ENCODE measurements at regions of chr13 and their contacts with region 1.

Region 1: DNA sequence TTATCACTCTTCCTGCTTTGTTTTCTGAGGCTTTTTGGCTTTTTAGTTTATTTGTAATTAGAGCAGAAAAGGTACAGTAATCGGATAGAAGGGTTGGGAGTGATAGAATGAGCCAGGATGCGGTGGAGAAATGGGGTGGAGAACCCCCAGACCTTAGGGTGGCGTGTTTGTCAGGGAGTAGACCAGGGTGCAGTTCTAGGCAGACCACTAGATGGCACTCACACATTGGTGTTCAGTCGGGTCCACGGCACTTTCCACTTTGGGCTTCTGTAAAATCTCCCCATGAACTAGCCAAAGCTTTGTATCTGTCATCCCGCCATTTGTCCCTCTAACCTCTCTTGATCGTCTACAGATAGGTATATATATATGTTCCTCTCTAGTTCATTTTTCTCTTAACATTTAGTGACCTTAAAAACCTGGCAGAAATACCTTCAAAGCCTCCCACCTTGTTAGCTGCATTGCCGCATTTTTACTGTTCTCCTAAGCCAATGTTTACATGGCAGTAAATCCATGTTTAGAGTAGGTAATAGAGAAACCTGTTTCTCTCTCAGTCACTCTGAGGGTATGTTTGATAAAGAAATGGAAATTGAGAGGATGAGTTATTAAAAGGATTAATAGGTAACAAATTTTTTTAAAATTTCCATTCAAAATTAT is 154.9 kb downstream of the TM9SF2 start:
- DNase-seq: peak; percentile 90
- ATAC-seq: peak; percentile 72
- H3K4me3 Mint-ChIP-seq: peak overlapping the region; percentile 42
- H3K27ac Mint-ChIP-seq: peak overlapping the region; percentile 32
- H3K4me1 Mint-ChIP-seq: peaks cover 44% of the 10 kb centered on the region
- H3K27me3 Mint-ChIP-seq: no peaks in the 10 kb centered on the region
- CTCF ChIP-seq: peak; percentile 92

Region 2: GRCh38 chr13:99606324-99607066 is 49.7 kb before region 1 on chr13:
- CTCF ChIA-PET with region 1: interaction called, 16 read pairs
- POLR2A ChIA-PET with region 1: no interaction called
- intact Hi-C with region 1: no loop called
- DNase-seq: peak; percentile 89
- ATAC-seq: peak; percentile 92
- H3K4me3 Mint-ChIP-seq: peak within 1 kb of the TSS; percentile 82
- H3K27ac Mint-ChIP-seq: peak within 1 kb of the TSS; percentile 86
- H3K4me1 Mint-ChIP-seq: peaks cover 41% of the 10 kb centered on the region
- H3K27me3 Mint-ChIP-seq: no peaks in the 10 kb centered on the region
- CTCF ChIP-seq: no peak

Region 3: GRCh38 chr13:99859178-99860177 is 203.3 kb after region 1 on chr13:
- CTCF ChIA-PET with region 1: interaction called, 4 read pairs
- POLR2A ChIA-PET with region 1: no interaction called
- intact Hi-C with region 1: loop called (anchors 10 kb)
- DNase-seq: peak; percentile 91
- ATAC-seq: peak; percentile 92
- H3K4me3 Mint-ChIP-seq: no peak overlapping the region
- H3K27ac Mint-ChIP-seq: peak overlapping the region; percentile 26
- H3K4me1 Mint-ChIP-seq: peaks cover 18% of the 10 kb centered on the region
- H3K27me3 Mint-ChIP-seq: peaks cover 20% of the 10 kb centered on the region
- CTCF ChIP-seq: no peak

Region 4: DNA sequence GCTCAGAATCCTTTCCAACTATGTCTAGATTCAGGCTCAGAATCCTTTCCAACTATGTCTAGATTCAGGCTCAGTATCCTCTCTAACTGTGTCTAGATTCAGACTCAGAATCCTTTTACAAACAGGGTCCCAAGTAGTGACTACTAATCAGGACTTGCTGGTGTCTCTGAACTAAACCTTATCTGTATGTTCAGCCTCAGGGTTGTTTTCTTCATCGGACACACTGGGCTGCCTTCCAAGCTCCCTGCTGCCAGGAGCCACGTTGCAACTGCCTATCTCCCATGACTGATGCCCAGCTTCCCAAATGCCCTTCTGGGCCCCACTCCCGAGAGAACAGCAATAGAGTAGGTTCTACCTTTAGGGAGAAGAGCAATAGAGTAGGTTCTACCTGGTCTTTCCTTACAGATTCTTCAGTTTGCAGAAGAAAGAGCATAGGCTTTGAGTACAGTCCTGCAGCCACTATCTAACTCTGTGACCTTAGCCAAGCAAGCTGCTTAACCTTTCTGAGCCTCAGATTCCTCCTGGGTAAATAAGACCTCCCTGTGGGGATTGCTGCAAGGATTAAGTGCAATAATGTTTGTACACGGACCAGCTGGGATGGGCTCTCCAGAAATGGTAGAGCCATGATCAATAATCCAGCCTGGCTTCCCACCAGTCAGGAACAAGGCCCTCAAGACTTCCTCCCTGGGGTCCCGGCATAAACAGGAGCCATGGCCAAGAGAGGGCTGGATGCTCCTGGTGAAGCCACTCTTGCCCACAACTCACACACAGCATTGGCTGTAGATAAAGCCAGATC is 253.8 kb after region 1 on chr13:
- CTCF ChIA-PET with region 1: interaction called, 33 read pairs
- POLR2A ChIA-PET with region 1: no interaction called
- intact Hi-C with region 1: loop called (anchors 5 kb)
- DNase-seq: no peak
- ATAC-seq: no peak
- H3K4me3 Mint-ChIP-seq: no peak overlapping the region
- H3K27ac Mint-ChIP-seq: no peak overlapping the region
- H3K4me1 Mint-ChIP-seq: peaks cover 15% of the 10 kb centered on the region
- H3K27me3 Mint-ChIP-seq: peaks cover 45% of the 10 kb centered on the region
- CTCF ChIP-seq: no peak

Region 5: DNA sequence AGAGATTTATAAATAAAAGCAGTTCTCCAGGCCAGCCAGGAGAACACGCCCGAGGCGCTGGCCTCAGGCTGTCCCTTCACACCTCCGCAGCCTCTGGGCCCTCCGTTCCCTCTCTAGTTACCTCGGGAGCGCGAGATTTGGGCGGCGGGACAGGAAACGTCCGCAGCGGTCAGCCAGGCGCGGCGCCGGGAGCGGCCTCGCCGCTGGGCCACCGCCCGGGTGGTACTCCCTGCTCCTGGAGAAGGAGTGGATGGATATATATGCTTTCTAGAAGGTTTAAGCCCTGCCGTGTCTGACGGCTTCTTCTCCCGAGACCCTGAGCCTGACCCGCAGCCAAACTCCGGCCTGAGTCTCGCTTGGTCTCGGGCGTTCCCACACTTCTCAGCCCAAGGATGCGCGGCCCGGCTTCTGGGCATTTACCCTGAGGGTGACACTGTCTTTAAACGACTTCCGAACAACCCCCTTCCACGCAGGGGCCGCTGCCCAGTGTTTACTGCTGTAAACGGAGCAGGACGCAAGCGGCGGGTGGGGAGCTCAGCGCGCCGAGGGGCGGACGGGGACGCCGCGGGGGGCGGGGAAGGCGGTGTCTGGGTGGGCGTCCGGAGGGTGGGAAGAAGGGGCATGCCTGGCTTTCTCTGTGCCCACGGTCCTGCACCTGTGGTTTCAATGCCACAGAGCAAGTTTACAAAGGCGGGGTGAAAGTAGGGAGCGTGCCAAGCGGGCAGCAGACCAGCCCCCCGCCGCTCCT is 323.4 kb after region 1 on chr13:
- CTCF ChIA-PET with region 1: interaction called, 4 read pairs
- POLR2A ChIA-PET with region 1: interaction called, 3 read pairs
- intact Hi-C with region 1: loop called (anchors 5 kb)
- DNase-seq: no peak
- ATAC-seq: no peak
- H3K4me3 Mint-ChIP-seq: no peak overlapping the region
- H3K27ac Mint-ChIP-seq: no peak overlapping the region
- H3K4me1 Mint-ChIP-seq: peaks cover 25% of the 10 kb centered on the region
- H3K27me3 Mint-ChIP-seq: peaks cover 70% of the 10 kb centered on the region
- CTCF ChIP-seq: no peak

Region 6: DNA sequence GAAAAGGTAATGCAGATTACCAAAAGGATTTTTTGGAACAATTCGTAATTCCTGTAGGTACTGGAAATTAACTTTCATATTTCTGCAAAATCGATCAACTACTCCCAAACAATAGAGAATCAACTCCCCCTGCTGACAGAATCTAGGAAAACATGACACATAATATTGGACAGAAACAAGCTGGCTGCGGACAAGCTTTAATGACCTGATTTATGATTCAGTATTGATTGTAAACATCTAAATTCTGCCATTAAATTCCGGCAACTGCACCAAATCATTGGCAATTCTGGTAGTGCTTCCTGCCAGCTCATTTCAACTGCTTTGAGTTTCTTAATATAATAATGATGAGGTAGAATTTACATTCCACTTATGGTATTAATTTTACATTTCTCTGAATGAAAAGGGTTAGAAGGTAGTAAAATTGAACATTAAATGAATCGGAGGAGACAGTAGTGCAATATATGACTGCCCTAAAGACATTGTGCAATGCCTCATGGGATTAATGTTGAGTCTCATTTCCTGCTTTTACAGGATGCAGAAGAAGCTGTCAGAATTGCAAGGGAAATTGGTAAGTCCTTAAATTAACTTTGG is 579.2 kb after region 1 on chr13:
- CTCF ChIA-PET with region 1: interaction called, 12 read pairs
- POLR2A ChIA-PET with region 1: no interaction called
- intact Hi-C with region 1: loop called (anchors 2 kb)
- DNase-seq: peak; percentile 21
- ATAC-seq: peak; percentile 47
- H3K4me3 Mint-ChIP-seq: no peak overlapping the region
- H3K27ac Mint-ChIP-seq: no peak overlapping the region
- H3K4me1 Mint-ChIP-seq: peaks cover 4% of the 10 kb centered on the region
- H3K27me3 Mint-ChIP-seq: no peaks in the 10 kb centered on the region
- CTCF ChIP-seq: peak; percentile 77

Measured in activated CD8-positive, alpha-beta T cell treated with anti-CD3 and anti-CD28 coated beads for 36 hours (primary cell).